SK-N-SH (cell line): ENCODE measurements at regions of chr10 and their contacts with region 1.

Region 1: GRCh38 chr10:5434017-5434753 is 21.8 kb downstream of the NET1 start:
- DNase-seq: peak; percentile 47
- H3K4me3 ChIP-seq: peak overlapping the region in 1 of 2 experiments; percentile 47; a peak in 2 of 4 replicates
- H3K27ac ChIP-seq: peak overlapping the region; percentile 60 to 89
- H3K4me1 ChIP-seq: peaks cover 0 to 13% of the 10 kb centered on the region in 2 experiments; a peak in 3 of 4 replicates
- H3K27me3 ChIP-seq: no peaks in the 10 kb centered on the region
- CTCF ChIP-seq: peak; percentile 78
- EP300 ChIP-seq: no peak
- RAD21 ChIP-seq: peak; percentile 77

Region 2: GRCh38 chr10:5199398-5199797 is 234.8 kb before region 1 on chr10:
- CTCF ChIA-PET with region 1: no interaction called
- POLR2A ChIA-PET with region 1: no interaction called
- DNase-seq: no peak
- H3K4me3 ChIP-seq: no peak overlapping the region
- H3K27ac ChIP-seq: no peak overlapping the region
- H3K4me1 ChIP-seq: no peaks in the 10 kb centered on the region
- H3K27me3 ChIP-seq: no peaks in the 10 kb centered on the region
- CTCF ChIP-seq: no peak
- EP300 ChIP-seq: no peak
- RAD21 ChIP-seq: no peak

Region 3: GRCh38 chr10:5423771-5424170 is 10.4 kb before region 1 on chr10:
- CTCF ChIA-PET with region 1: interaction called, 13 read pairs
- POLR2A ChIA-PET with region 1: no interaction called
- DNase-seq: no peak
- H3K4me3 ChIP-seq: no peak overlapping the region
- H3K27ac ChIP-seq: peak overlapping the region in 1 of 2 experiments; percentile 21; a peak in 1 of 4 replicates
- H3K4me1 ChIP-seq: peaks cover 0 to 9% of the 10 kb centered on the region in 2 experiments; a peak in 2 of 4 replicates
- H3K27me3 ChIP-seq: no peaks in the 10 kb centered on the region
- CTCF ChIP-seq: no peak
- EP300 ChIP-seq: no peak
- RAD21 ChIP-seq: no peak

Region 4: GRCh38 chr10:5446390-5446926 is 12.3 kb after region 1 on chr10:
- CTCF ChIA-PET with region 1: interaction called, 13 read pairs
- POLR2A ChIA-PET with region 1: no interaction called
- DNase-seq: no peak
- H3K4me3 ChIP-seq: no peak overlapping the region
- H3K27ac ChIP-seq: 0 out of 4 replicates have a peak overlapping the region, but pooled peaks of 1 of the 2 experiments have one; percentile 22
- H3K4me1 ChIP-seq: peaks cover 2 to 23% of the 10 kb centered on the region in 2 experiments; a peak in 3 of 4 replicates
- H3K27me3 ChIP-seq: no peaks in the 10 kb centered on the region
- CTCF ChIP-seq: no peak
- EP300 ChIP-seq: no peak
- RAD21 ChIP-seq: no peak